Gastrocnemius medialis (tissue), 4 donors: ENCODE measurements at regions of chr1 and their contacts with region 1.

Region 1: DNA sequence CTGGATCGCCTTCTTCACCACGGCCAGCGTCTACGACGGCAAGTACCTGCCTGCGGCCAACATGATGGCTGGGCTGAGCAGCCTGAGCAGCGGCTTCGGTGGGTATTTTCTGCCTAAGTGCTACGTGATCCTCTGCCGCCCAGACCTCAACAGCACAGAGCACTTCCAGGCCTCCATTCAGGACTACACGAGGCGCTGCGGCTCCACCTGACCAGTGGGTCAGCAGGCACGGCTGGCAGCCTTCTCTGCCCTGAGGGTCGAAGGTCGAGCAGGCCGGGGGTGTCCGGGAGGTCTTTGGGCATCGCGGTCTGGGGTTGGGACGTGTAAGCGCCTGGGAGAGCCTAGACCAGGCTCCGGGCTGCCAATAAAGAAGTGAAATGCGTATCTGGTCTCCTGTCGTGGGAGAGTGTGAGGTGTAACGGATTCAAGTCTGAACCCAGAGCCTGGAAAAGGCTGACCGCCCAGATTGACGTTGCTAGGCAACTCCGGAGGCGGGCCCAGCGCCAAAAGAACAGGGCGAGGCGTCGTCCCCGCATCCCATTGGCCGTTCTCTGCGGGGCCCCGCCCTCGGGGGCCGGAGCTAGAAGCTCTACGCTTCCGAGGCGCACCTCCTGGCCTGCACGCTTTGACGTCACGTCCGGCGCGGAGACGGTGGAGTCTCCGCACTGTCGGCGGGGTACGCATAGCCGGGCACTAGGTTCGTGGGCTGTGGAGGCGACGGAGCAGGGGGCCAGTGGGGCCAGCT is at the start of gene ZBTB48:
- DNase-seq: peak; percentile 98 to 99
- ATAC-seq: peak; percentile 88 to 89
- H3K4me3 ChIP-seq: peak within 1 kb of the TSS; percentile 80 to 94 (median 86)
- H3K27ac ChIP-seq: peak within 1 kb of the TSS; percentile 91 to 98 (median 96)
- H3K4me1 ChIP-seq: peaks cover 17 to 26% of the 10 kb centered on the region in 2 donors
- H3K27me3 ChIP-seq: no peaks in the 10 kb centered on the region
- CTCF ChIP-seq: no peak
- POLR2A ChIP-seq: peak; percentile 95 to 97
- total RNA-seq, gene ZBTB48: 9.3 to 14.5 (median 11.3) TPM

Region 2: GRCh38 chr1:6602669-6603237 is 23.2 kb after region 1 on chr1 and contains the start of gene KLHL21:
- in situ Hi-C with region 1: no loop called
- intact Hi-C with region 1: loop called (anchors 2 kb)
- DNase-seq: peak; percentile 89 to 93
- ATAC-seq: peak; percentile 32 to 38
- H3K4me3 ChIP-seq: peak within 1 kb of the TSS; percentile 76 to 92 (median 90)
- H3K27ac ChIP-seq: peak within 1 kb of the TSS; percentile 98 to 100 (median 100)
- H3K4me1 ChIP-seq: peaks cover 42 to 50% of the 10 kb centered on the region in 2 donors
- H3K27me3 ChIP-seq: no peaks in the 10 kb centered on the region
- CTCF ChIP-seq: no peak
- POLR2A ChIP-seq: peak; percentile 94 to 98
- total RNA-seq, gene KLHL21: 176 to 481 (median 267) TPM

Region 3: DNA sequence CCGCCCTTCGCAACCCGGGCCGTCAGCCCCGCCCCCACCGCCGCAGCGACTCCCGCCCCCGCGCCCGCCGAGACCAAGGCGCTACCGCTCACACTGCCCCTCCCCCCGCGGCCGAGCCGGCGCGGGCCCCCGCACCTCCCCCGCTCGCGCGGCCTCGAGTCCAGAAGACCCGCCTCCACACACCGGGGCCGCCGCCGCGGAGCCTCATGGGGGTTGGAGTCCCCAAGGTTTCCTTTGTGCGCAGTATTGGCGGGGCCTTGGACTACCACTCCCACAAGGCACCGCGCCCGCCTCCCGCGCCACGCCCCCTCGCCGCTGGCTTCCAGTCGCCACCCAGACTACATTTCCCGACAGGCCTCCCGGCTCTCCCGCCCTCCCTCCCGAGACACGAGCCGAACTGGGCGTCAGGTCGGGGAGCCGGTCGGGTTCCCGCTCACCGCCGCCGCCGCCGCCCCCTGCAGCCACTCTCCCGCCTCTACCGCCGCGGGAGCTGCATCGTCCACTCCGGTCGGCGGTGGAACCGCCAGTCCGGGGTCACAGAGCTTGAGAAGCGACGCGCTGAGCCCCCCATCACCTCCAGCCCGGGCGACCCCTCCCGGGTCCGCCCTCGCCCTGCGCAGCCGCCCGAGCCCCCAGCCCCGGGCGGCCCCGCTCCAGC is 33.9 kb after region 1 on chr1 and contains the start of gene PHF13:
- in situ Hi-C with region 1: no loop called
- intact Hi-C with region 1: loop called (anchors 1 kb)
- DNase-seq: peak; percentile 99 to 100
- ATAC-seq: peak; percentile 81
- H3K4me3 ChIP-seq: peak within 1 kb of the TSS; percentile 90 to 100 (median 95)
- H3K27ac ChIP-seq: peak within 1 kb of the TSS; percentile 97 to 100 (median 98)
- H3K4me1 ChIP-seq: peaks cover 35 to 37% of the 10 kb centered on the region in 2 donors
- H3K27me3 ChIP-seq: no peaks in the 10 kb centered on the region
- CTCF ChIP-seq: peak in 1 of 5 experiments; percentile 11
- POLR2A ChIP-seq: peak; percentile 89
- total RNA-seq, gene PHF13: 4.7 to 8.5 (median 5.3) TPM

Region 4: DNA sequence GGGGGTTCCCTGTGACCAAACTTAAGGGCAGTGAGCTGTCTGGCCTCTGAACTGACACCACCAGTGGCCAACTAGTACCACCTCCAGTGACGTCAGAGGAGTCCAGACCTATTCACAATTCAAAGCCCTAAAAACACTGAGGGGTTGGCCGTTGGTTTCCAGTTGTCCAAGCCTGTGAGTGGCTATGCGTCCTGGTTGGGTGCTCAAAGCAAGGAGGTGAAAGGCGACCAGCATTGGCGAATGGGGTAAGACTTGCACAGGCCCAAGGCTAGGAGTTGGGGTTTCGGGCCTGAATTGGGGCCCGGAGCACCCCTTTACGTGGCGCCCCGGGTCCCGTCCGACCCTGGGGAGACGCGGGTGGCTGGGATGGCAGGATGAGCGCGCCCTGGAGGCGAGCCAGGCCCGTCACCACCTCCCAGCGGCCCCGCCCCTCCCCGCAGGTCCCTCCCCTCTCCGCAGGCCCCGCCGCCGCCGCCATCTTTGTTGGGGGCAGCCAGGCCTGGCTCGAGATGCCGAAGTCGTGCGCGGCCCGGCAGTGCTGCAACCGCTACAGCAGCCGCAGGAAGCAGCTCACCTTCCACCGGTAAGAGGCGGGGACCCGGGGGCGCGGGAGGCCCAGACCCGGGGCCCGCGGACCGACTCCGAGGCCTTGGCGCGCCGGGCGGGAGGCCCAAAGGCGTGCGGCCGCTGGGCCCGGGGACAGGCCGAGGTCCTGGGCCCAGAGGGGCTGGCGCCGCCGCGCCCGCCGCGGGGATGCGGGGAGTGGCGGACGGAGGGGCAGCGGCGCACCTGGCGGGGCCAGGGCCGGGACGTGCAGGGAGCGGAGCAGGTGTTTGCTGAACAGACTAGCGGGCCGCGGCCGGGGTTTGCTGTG is 45.4 kb after region 1 on chr1 and contains the start of gene THAP3:
- in situ Hi-C with region 1: loop called in 2 of 4 experiments (anchors 10 kb)
- intact Hi-C with region 1: loop called (anchors 5 kb)
- DNase-seq: peak; percentile 75 to 83
- ATAC-seq: peak; percentile 81 to 89
- H3K4me3 ChIP-seq: peak within 1 kb of the TSS; percentile 68 to 83 (median 72)
- H3K27ac ChIP-seq: peak within 1 kb of the TSS; percentile 80 to 92 (median 90)
- H3K4me1 ChIP-seq: peaks cover 22 to 24% of the 10 kb centered on the region in 2 donors
- H3K27me3 ChIP-seq: no peaks in the 10 kb centered on the region
- CTCF ChIP-seq: peak in 1 of 5 experiments; percentile 22
- POLR2A ChIP-seq: peak; percentile 37 to 46
- total RNA-seq, gene THAP3: 16.7 to 31.0 (median 24.2) TPM

Region 5: DNA sequence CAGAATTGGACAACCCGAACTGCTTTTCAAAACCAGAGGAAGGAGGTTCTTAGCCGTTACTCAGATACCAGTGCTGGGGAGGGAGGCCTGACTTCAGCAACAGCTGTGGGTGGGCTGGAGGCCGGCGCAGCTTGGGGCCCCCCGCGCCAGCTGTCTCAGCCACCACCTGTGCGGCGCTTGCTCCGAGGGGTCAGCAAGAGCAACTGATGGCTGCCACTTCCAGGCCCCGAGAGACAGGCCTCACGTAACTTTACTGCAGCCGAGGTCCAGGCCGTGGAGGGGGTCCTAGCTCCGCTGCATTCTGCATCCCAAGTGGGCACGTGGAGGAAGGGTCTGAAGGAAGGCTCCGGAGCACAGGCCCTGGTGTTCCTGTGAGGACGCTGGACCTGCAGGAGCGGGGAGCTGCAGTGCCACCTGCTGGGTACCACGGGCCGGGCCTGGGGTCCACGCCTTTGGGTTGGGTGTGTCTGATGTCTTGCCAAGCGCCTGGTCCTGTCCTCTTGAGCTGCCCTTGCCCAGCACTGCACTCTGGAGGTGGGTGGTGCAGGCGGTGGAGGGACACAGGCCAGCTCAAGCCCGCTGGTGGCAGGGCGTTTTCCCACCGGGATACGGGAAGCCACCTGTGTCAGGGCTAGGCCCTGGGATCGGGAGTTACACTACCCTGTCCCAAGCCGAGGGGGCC is 55.0 kb after region 1 on chr1:
- in situ Hi-C with region 1: loop called in 2 of 4 experiments (anchors 10 kb)
- intact Hi-C with region 1: loop called (anchors 5 kb)
- DNase-seq: peak; percentile 60 to 88
- ATAC-seq: peak; percentile 70 to 89
- H3K4me3 ChIP-seq: no peak overlapping the region
- H3K27ac ChIP-seq: peak overlapping the region in 2 of 4 donors; percentile 12 to 62
- H3K4me1 ChIP-seq: peaks cover 0 to 10% of the 10 kb centered on the region in 2 donors
- H3K27me3 ChIP-seq: no peaks in the 10 kb centered on the region
- CTCF ChIP-seq: peak; percentile 57 to 77 (median 68)
- POLR2A ChIP-seq: no peak